Dorsolateral prefrontal cortex (tissue), 120 donors: ENCODE measurements at regions of chr5 and their contacts with region 1.

Region 1: GRCh38 chr5:168579488-168580226 is 489 bp upstream of the PANK3 start:
- DNase-seq: peak; percentile 99 to 100 (median 100)
- H3K4me3 ChIP-seq: peak overlapping the region; percentile 67 to 99 (median 93)
- H3K27ac ChIP-seq: peak overlapping the region; percentile 86 to 99 (median 97)
- H3K27me3 ChIP-seq: no peaks in the 10 kb centered on the region
- CTCF ChIP-seq: peak in 26 of 56 donors; percentile 5 to 46 (median 20)

Region 2: GRCh38 chr5:168486136-168486879 is 93.3 kb before region 1 on chr5 and contains the start of gene RARS1:
- intact Hi-C with region 1: loop called (anchors 1 kb)
- DNase-seq: peak; percentile 91 to 98 (median 96)
- H3K4me3 ChIP-seq: peak within 1 kb of the TSS; percentile 61 to 100 (median 95)
- H3K27ac ChIP-seq: peak within 1 kb of the TSS in 50 of 59 donors; percentile 7 to 91 (median 68)
- H3K27me3 ChIP-seq: peaks cover 0 to 4% (median 0%) of the 10 kb centered on the region in 45 donors
- CTCF ChIP-seq: peak; percentile 93 to 100 (median 98)
- total RNA-seq, gene RARS1: 37.0 to 79.2 (median 58.6) TPM

Region 3: GRCh38 chr5:168770036-168770498 is 190.4 kb after region 1 on chr5:
- intact Hi-C with region 1: loop called in 1 of 2 experiments (anchors 10 kb)
- DNase-seq: no peak
- H3K4me3 ChIP-seq: no peak overlapping the region
- H3K27ac ChIP-seq: no peak overlapping the region
- H3K27me3 ChIP-seq: peaks cover 0 to 12% (median 0%) of the 10 kb centered on the region in 45 donors
- CTCF ChIP-seq: no peak

Region 4: DNA sequence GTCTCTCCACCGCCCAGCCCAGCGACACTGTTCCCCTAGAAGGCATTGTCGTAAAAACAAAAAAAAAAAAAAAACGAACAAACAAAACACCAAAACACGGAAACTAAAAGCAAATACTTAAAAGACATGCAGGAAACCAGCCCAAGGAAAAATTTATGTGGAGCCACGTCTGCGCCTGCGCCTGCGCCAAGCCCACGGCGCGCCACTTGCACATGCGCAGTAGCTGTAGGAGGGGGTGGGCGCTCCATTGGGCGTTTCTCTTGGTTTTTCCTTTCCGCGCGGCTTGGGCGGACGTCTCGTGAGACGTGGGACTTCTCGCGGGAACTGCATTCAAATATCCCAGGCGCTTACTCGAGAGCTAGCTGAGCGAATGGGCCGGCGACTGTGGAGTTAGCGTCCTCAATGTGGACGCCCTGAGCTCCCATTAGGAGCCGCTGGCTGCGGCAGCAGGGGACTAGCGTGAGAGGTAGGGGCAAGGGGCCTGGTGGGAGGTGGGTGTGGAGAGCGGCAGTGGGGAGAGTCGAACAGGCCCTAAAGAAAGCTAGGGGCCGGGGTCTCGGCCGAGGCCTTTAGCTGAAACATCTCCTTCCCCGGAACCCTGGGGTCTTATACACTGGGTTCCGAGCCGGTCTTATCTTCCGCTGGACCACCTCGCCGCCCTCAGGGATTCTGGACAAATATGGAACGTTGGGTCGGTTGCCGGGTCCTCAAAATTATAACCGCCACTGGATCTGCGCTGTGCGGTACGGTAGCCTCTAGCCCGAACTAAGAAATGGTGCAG is 1004.0 kb after region 1 on chr5 and contains the start of gene SPDL1:
- intact Hi-C with region 1: loop called in 1 of 2 experiments (anchors 10 kb)
- DNase-seq: peak; percentile 85 to 97 (median 93)
- H3K4me3 ChIP-seq: peak within 1 kb of the TSS; percentile 58 to 97 (median 87)
- H3K27ac ChIP-seq: peak within 1 kb of the TSS in 52 of 59 donors; percentile 2 to 89 (median 70)
- H3K27me3 ChIP-seq: no peaks in the 10 kb centered on the region
- CTCF ChIP-seq: peak in 41 of 56 donors; percentile 7 to 68 (median 36)
- total RNA-seq, gene SPDL1: 6.4 to 23.1 (median 14.0) TPM